Testis (tissue), 5 donors: ENCODE measurements at regions of chr2 and their contacts with region 1.

Region 1: DNA sequence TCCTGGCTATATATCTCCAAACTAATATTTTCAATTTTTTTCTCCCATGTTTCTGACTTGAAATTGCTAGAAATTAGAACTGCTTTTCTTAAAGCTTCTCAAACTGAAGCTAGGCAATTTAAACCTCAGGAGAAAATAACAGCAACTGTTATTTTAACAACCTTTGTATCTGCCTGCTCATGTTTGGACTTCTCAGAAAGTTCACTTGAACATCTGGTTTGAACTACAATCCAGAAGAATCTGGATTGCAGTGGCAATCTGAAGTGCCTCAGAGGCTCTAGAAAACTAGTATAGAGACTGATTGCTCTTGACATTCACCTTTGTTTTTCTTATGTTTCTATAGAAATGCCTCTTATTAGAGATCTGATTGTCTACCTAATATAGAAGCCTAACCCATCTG is 64.1 kb downstream of the STAT4 start:
- DNase-seq: no peak
- H3K4me3 ChIP-seq: no peak overlapping the region
- H3K27ac ChIP-seq: no peak overlapping the region
- H3K4me1 ChIP-seq: no peaks in the 10 kb centered on the region
- H3K27me3 ChIP-seq: no peaks in the 10 kb centered on the region
- CTCF ChIP-seq: no peak
- POLR2A ChIP-seq: no peak

Region 2: GRCh38 chr2:190511104-190511503 is 575.6 kb before region 1 on chr2:
- intact Hi-C with region 1: no loop called
- DNase-seq: no peak
- H3K4me3 ChIP-seq: no peak overlapping the region
- H3K27ac ChIP-seq: no peak overlapping the region
- H3K4me1 ChIP-seq: no peaks in the 10 kb centered on the region
- H3K27me3 ChIP-seq: no peaks in the 10 kb centered on the region
- CTCF ChIP-seq: peak in 1 of 3 experiments; percentile 60
- POLR2A ChIP-seq: no peak

Region 3: GRCh38 chr2:191128172-191128910 is 41.6 kb after region 1 on chr2:
- intact Hi-C with region 1: loop called (anchors 5 kb)
- DNase-seq: no peak
- H3K4me3 ChIP-seq: no peak overlapping the region
- H3K27ac ChIP-seq: no peak overlapping the region
- H3K4me1 ChIP-seq: no peaks in the 10 kb centered on the region
- H3K27me3 ChIP-seq: no peaks in the 10 kb centered on the region
- CTCF ChIP-seq: no peak
- POLR2A ChIP-seq: no peak

Region 4: DNA sequence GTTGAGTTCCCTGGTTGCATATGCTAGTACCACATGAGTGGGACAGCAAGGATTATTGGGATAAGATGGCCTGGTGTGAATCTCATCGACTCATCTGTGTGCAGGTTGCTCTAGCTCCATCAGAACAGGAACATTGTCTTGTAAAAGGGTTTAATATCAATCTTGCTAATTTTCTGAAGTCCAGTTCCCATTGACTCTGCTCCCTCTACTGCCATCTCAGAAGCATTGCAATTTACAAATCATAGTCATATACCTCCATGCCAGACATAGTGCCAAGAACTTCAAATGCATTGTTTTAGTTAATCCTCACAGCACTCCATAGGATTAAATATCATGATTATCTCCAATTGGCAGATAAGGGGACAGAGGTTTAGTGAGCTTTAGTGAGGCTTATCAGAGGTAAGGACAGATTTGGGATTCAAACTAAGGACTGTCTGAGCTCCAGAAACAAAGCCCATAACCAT is 68.9 kb after region 1 on chr2:
- intact Hi-C with region 1: no loop called
- DNase-seq: no peak
- H3K4me3 ChIP-seq: no peak overlapping the region
- H3K27ac ChIP-seq: no peak overlapping the region
- H3K4me1 ChIP-seq: no peaks in the 10 kb centered on the region
- H3K27me3 ChIP-seq: no peaks in the 10 kb centered on the region
- CTCF ChIP-seq: peak; percentile 37 to 48 (median 38)
- POLR2A ChIP-seq: no peak